Left lung (tissue), 14 donors: ENCODE measurements at regions of chr3 and their contacts with region 1.

Region 1: GRCh38 chr3:87082796-87083440 is 92.0 kb upstream of the VGLL3 start:
- DNase-seq: peak in 1 of 4 donors; percentile 75
- ATAC-seq: peak; percentile 92
- H3K4me3 ChIP-seq: no peak overlapping the region
- H3K27ac ChIP-seq: no peak overlapping the region
- H3K4me1 ChIP-seq: no peaks in the 10 kb centered on the region
- H3K27me3 ChIP-seq: no peaks in the 10 kb centered on the region
- CTCF ChIP-seq: peak; percentile 24 to 40

Region 2: GRCh38 chr3:86782286-86782685 is 300.6 kb before region 1 on chr3:
- intact Hi-C with region 1: loop called in 1 of 2 experiments (anchors 5 kb)
- DNase-seq: no peak
- ATAC-seq: no peak
- H3K4me3 ChIP-seq: no peak overlapping the region
- H3K27ac ChIP-seq: no peak overlapping the region
- H3K4me1 ChIP-seq: no peaks in the 10 kb centered on the region
- H3K27me3 ChIP-seq: no peaks in the 10 kb centered on the region
- CTCF ChIP-seq: no peak